ENCODE measurements at regions of chr5 and their contacts with region 1.

Region 1: GRCh38 chr5:170333161-170333910 is 35.8 kb upstream of the LCP2 start:
- DNase-seq: peak; percentile 74 to 83 (median 79)
- H3K4me3 ChIP-seq: peak overlapping the region in 1 of 3 experiments; percentile 31
- H3K4me3 Mint-ChIP-seq: peak overlapping the region; percentile 57 to 73
- H3K27ac ChIP-seq: peak overlapping the region; percentile 83 to 85
- H3K27ac Mint-ChIP-seq: peak overlapping the region in 1 of 7 donors; percentile 54
- H3K4me1 ChIP-seq: peaks cover 88 to 96% of the 10 kb centered on the region in 2 donors
- H3K4me1 Mint-ChIP-seq: peaks cover 72% of the 10 kb centered on the region
- H3K27me3 ChIP-seq: no peaks in the 10 kb centered on the region
- H3K27me3 Mint-ChIP-seq: peaks cover 0 to 15% (median 6%) of the 10 kb centered on the region in 3 donors
- CTCF ChIP-seq: no peak

Region 2: GRCh38 chr5:170312666-170313065 is 20.7 kb before region 1 on chr5:
- intact Hi-C with region 1: loop called in 1 of 2 experiments (anchors 2 kb)
- DNase-seq: peak; percentile 99 to 100 (median 100)
- H3K4me3 ChIP-seq: peak overlapping the region; percentile 22 to 45 (median 24)
- H3K4me3 Mint-ChIP-seq: peak overlapping the region; percentile 71 to 87
- H3K27ac ChIP-seq: peak overlapping the region; percentile 91 to 97
- H3K27ac Mint-ChIP-seq: peak overlapping the region; percentile 97 to 100 (median 98)
- H3K4me1 ChIP-seq: peaks cover 76 to 78% of the 10 kb centered on the region in 2 donors
- H3K4me1 Mint-ChIP-seq: peaks cover 79% of the 10 kb centered on the region
- H3K27me3 ChIP-seq: no peaks in the 10 kb centered on the region
- H3K27me3 Mint-ChIP-seq: peaks cover 0 to 6% (median 2%) of the 10 kb centered on the region in 3 donors
- CTCF ChIP-seq: no peak

Region 3: GRCh38 chr5:170591054-170591453 is 257.7 kb after region 1 on chr5:
- intact Hi-C with region 1: no loop called
- DNase-seq: no peak
- H3K4me3 ChIP-seq: no peak overlapping the region
- H3K4me3 Mint-ChIP-seq: no peak overlapping the region
- H3K27ac ChIP-seq: no peak overlapping the region
- H3K27ac Mint-ChIP-seq: no peak overlapping the region
- H3K4me1 ChIP-seq: no peaks in the 10 kb centered on the region
- H3K4me1 Mint-ChIP-seq: no peaks in the 10 kb centered on the region
- H3K27me3 ChIP-seq: no peaks in the 10 kb centered on the region
- H3K27me3 Mint-ChIP-seq: peaks cover 2 to 9% (median 8%) of the 10 kb centered on the region in 3 donors
- CTCF ChIP-seq: no peak

Measured in CD14-positive monocyte (primary cell).